IMR-90 (cell line): ENCODE measurements at regions of chr5 and their contacts with region 1.

Region 1: GRCh38 chr5:132190161-132190817 is 37.4 kb downstream of the P4HA2 start:
- DNase-seq: peak; percentile 81
- ATAC-seq: peak; percentile 100
- H3K4me3 ChIP-seq: no peak overlapping the region
- H3K27ac ChIP-seq: no peak overlapping the region
- H3K4me1 ChIP-seq: no peaks in the 10 kb centered on the region
- H3K27me3 ChIP-seq: no peaks in the 10 kb centered on the region
- CTCF ChIP-seq: peak; percentile 87
- POLR2A ChIP-seq: no peak
- RAD21 ChIP-seq: peak; percentile 75

Region 2: GRCh38 chr5:132180134-132180745 is 10.0 kb before region 1 on chr5:
- CTCF ChIA-PET with region 1: interaction called, 12 read pairs
- POLR2A ChIA-PET with region 1: no interaction called
- dilution Hi-C with region 1: no loop called
- in situ Hi-C with region 1: no loop called
- intact Hi-C with region 1: no loop called
- DNase-seq: peak; percentile 74
- ATAC-seq: peak; percentile 75
- H3K4me3 ChIP-seq: no peak overlapping the region
- H3K27ac ChIP-seq: no peak overlapping the region
- H3K4me1 ChIP-seq: peaks cover 2% of the 10 kb centered on the region; the same call in 1 of the 2 replicates
- H3K27me3 ChIP-seq: no peaks in the 10 kb centered on the region
- CTCF ChIP-seq: peak; percentile 88
- POLR2A ChIP-seq: no peak
- RAD21 ChIP-seq: peak; percentile 72

Region 3: DNA sequence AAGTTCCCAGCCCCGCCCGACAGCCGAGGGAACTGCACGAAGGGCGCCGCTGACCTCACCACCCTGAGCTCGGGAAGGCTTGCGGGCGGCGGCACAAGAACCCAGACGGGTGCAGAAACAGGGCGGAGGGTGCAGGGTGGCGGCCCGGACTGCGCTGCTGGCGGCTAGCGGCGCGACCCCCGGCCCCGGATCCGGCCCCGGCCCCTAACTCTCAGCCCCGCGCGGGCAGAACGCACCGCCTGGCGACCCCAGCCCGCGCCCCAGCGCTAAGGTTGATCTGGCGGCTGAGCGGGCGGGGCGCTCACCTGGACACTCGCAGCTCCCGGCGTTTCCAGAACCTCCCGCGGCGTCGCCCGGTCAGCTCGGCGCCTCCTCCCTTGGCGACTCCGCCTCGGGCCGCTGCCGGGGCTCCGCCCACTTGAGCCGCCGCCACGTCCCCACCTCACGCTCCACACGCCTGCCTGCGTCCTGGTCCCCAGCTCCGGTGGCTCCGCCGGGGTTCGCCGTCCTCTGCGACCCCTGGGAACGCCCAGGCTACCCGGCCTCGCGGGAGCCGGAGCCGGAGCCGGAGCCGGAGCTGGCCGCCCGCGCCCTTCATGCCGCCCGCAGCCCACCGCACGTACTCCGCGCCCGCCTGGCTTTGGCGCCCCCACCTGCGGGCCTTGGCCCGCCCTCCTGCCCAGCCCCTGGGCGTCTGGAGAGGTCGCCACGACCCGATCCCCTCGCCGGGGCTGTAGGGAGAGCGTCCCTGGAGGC is 37.4 kb after region 1 on chr5 and contains the start of gene P4HA2:
- CTCF ChIA-PET with region 1: interaction called, 10 read pairs
- POLR2A ChIA-PET with region 1: no interaction called
- dilution Hi-C with region 1: no loop called
- in situ Hi-C with region 1: no loop called
- intact Hi-C with region 1: no loop called
- DNase-seq: peak; percentile 65
- ATAC-seq: peak; percentile 88
- H3K4me3 ChIP-seq: peak within 1 kb of the TSS; percentile 61
- H3K27ac ChIP-seq: peak within 1 kb of the TSS; percentile 61
- H3K4me1 ChIP-seq: peaks cover 27% of the 10 kb centered on the region
- H3K27me3 ChIP-seq: no peaks in the 10 kb centered on the region; the same call in 1 of the 2 replicates
- CTCF ChIP-seq: no peak; the same call in 1 of the 2 replicates
- POLR2A ChIP-seq: peak; percentile 71; the same call in 1 of the 2 replicates
- RAD21 ChIP-seq: no peak
- total RNA-seq, gene P4HA2: 190 and 225 TPM in 2 replicates

Region 4: GRCh38 chr5:132259069-132259851 is 69.0 kb after region 1 on chr5:
- CTCF ChIA-PET with region 1: no interaction called
- POLR2A ChIA-PET with region 1: no interaction called
- dilution Hi-C with region 1: no loop called
- in situ Hi-C with region 1: no loop called
- intact Hi-C with region 1: loop called (anchors 5 kb)
- DNase-seq: peak; percentile 95
- ATAC-seq: peak; percentile 50
- H3K4me3 ChIP-seq: peak overlapping the region; percentile 92
- H3K27ac ChIP-seq: peak overlapping the region; percentile 97
- H3K4me1 ChIP-seq: peaks cover 46% of the 10 kb centered on the region
- H3K27me3 ChIP-seq: no peaks in the 10 kb centered on the region
- CTCF ChIP-seq: no peak
- POLR2A ChIP-seq: peak; percentile 73
- RAD21 ChIP-seq: 0 out of 2 replicates have a peak, but pooled peaks have one; percentile 2